ENCODE measurements at regions of chrX and their contacts with region 1.

Region 1: GRCh38 chrX:27619975-27620374 is 29.8 kb downstream of the DCAF8L2 start:
- DNase-seq: peak; percentile 47
- H3K4me3 Mint-ChIP-seq: no peak overlapping the region
- H3K27ac Mint-ChIP-seq: no peak overlapping the region
- H3K4me1 Mint-ChIP-seq: no peaks in the 10 kb centered on the region
- H3K27me3 Mint-ChIP-seq: no peaks in the 10 kb centered on the region
- CTCF ChIP-seq: peak; percentile 42

Region 2: GRCh38 chrX:27555514-27555913 is 64.5 kb before region 1 on chrX:
- CTCF ChIA-PET with region 1: interaction called, 3 read pairs
- POLR2A ChIA-PET with region 1: no interaction called
- intact Hi-C with region 1: loop called (anchors 2 kb)
- DNase-seq: peak; percentile 47
- H3K4me3 Mint-ChIP-seq: no peak overlapping the region
- H3K27ac Mint-ChIP-seq: no peak overlapping the region
- H3K4me1 Mint-ChIP-seq: no peaks in the 10 kb centered on the region
- H3K27me3 Mint-ChIP-seq: no peaks in the 10 kb centered on the region
- CTCF ChIP-seq: peak; percentile 35

Measured in MCF 10A (cell line).